Dorsolateral prefrontal cortex (tissue), 120 donors: ENCODE measurements at regions of chr6 and their contacts with region 1.

Region 1: GRCh38 chr6:8983188-8983688 is 547.9 kb upstream of the SLC35B3 start:
- DNase-seq: peak; percentile 36 to 76 (median 59)
- H3K4me3 ChIP-seq: peak overlapping the region in 12 of 59 donors; percentile 1 to 29 (median 11)
- H3K27ac ChIP-seq: no peak overlapping the region
- H3K27me3 ChIP-seq: peaks cover 0 to 10% (median 0%) of the 10 kb centered on the region in 45 donors
- CTCF ChIP-seq: peak; percentile 70 to 98 (median 93)

Region 2: GRCh38 chr6:9140172-9140571 is 156.9 kb after region 1 on chr6:
- intact Hi-C with region 1: no loop called
- DNase-seq: peak in 2 of 10 donors; percentile 10 to 14
- H3K4me3 ChIP-seq: peak overlapping the region in 12 of 59 donors; percentile 1 to 42 (median 15)
- H3K27ac ChIP-seq: no peak overlapping the region
- H3K27me3 ChIP-seq: peaks cover 0 to 25% (median 0%) of the 10 kb centered on the region in 45 donors
- CTCF ChIP-seq: no peak

Region 3: DNA sequence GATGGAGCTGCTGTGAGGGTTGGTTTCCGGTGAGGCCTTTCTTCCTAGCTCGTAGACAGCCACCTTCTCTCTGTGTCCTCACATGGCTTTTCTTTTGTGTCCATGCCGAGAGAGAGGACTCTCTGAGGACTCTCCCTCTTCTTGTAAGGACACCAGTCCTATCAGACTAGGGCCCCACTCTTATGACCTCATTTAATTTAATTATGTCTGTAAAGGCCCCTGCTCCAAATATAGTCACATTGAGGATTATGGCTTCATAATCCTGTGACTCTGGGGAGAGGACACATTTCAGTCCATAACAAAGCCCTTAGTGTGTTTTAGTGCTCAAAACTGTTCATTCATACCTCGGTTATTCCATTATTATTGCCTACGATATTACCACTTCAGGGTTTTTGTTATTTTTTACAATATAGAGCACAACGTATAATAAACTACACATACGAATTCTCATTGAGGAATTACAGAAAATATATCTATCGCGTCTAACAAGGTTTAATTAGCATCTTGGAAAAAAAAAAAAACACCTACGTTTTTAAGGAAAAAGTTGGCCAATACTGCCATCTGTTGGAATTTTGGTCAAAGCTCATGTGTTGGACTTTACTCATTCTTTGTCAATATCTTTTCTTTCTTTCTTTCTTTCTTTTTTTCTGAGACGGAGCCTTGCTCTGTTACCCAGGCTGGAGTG is 1451.6 kb after region 1 on chr6:
- intact Hi-C with region 1: loop called (anchors 5 kb)
- DNase-seq: no peak
- H3K4me3 ChIP-seq: peak overlapping the region in 11 of 59 donors; percentile 4 to 45 (median 23)
- H3K27ac ChIP-seq: no peak overlapping the region
- H3K27me3 ChIP-seq: peaks cover 0 to 10% (median 0%) of the 10 kb centered on the region in 45 donors
- CTCF ChIP-seq: peak; percentile 61 to 91 (median 74)